Testis (tissue), 5 donors: ENCODE measurements at regions of chr7 and their contacts with region 1.

Region 1: DNA sequence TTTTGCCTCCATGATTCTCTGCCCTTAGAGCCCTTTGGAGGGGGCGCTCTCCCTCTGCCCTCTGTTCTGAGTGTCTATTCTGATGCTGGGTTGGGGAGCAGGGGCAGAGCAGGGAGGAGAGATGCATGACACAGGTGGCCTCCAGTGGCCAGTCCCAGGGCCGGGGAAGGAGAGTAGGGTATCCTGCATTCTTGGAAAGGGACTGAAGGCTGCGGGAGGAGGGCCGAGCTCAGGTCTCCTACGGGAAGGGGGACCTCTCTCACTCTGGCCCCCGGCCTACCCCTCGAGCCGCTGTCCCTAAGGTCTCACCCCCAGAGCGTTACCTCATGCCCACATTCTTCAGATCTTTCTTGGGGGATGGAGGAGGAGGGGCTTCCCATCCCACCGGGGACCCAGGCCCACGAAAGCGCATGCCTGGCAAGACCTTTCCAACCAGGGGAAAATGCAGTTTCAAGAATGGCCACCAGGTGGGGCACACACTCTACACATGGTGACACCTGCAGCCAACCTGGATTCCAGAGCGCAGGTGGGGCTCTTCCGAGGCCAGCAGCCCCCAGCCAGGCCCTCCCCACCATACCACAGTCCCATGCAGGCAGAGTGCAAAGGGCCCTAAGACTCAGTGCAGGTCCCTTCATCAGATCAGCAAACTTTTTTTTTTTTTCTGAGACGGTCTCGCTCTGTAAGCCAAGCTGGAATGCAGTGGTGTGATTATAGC is 86.4 kb downstream of the MYL10 start:
- DNase-seq: peak; percentile 92
- H3K4me3 ChIP-seq: no peak overlapping the region
- H3K27ac ChIP-seq: no peak overlapping the region
- H3K4me1 ChIP-seq: no peaks in the 10 kb centered on the region
- H3K27me3 ChIP-seq: no peaks in the 10 kb centered on the region
- CTCF ChIP-seq: peak; percentile 86 to 99 (median 92)
- POLR2A ChIP-seq: no peak

Region 2: DNA sequence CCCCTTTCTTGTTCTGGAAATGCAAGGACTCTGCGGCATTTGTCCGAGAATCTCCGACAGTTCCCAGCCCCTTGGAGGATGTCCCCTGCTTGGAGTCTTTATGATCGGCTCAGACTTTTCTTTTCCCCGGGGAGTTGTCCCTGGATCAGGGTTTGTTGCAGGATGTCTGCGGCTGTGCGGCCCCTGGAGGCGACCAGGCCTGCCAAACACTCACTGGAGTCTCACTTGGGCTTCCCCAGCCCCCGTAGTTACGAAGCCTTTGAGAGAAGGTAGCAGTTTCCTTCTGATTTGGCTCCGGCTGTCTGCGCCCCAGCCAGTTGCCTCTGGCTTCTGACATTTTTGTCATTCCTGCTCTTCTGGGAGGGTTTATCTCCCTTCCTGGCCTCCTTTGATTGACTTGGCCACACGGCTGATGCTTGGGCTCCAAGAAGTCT is 163.9 kb before region 1 on chr7:
- intact Hi-C with region 1: no loop called
- DNase-seq: no peak
- H3K4me3 ChIP-seq: no peak overlapping the region
- H3K27ac ChIP-seq: no peak overlapping the region
- H3K4me1 ChIP-seq: no peaks in the 10 kb centered on the region
- H3K27me3 ChIP-seq: no peaks in the 10 kb centered on the region
- CTCF ChIP-seq: no peak
- POLR2A ChIP-seq: no peak

Region 3: GRCh38 chr7:101598422-101598985 is 55.8 kb after region 1 on chr7:
- intact Hi-C with region 1: no loop called
- DNase-seq: no peak
- H3K4me3 ChIP-seq: no peak overlapping the region
- H3K27ac ChIP-seq: peak overlapping the region in 1 of 2 donors; percentile 36
- H3K4me1 ChIP-seq: peaks cover 8% of the 10 kb centered on the region
- H3K27me3 ChIP-seq: no peaks in the 10 kb centered on the region
- CTCF ChIP-seq: no peak
- POLR2A ChIP-seq: no peak

Region 4: GRCh38 chr7:101669307-101669706 is 126.6 kb after region 1 on chr7:
- intact Hi-C with region 1: no loop called
- DNase-seq: no peak
- H3K4me3 ChIP-seq: no peak overlapping the region
- H3K27ac ChIP-seq: no peak overlapping the region
- H3K4me1 ChIP-seq: no peaks in the 10 kb centered on the region
- H3K27me3 ChIP-seq: no peaks in the 10 kb centered on the region
- CTCF ChIP-seq: no peak
- POLR2A ChIP-seq: no peak

Region 5: GRCh38 chr7:102260856-102261255 is 718.2 kb after region 1 on chr7:
- intact Hi-C with region 1: loop called (anchors 10 kb)
- DNase-seq: peak; percentile 49
- H3K4me3 ChIP-seq: no peak overlapping the region
- H3K27ac ChIP-seq: no peak overlapping the region
- H3K4me1 ChIP-seq: no peaks in the 10 kb centered on the region
- H3K27me3 ChIP-seq: no peaks in the 10 kb centered on the region
- CTCF ChIP-seq: no peak
- POLR2A ChIP-seq: no peak